Posterior vena cava (tissue), 2 donors: ENCODE measurements at regions of chr4 and their contacts with region 1.

Region 1: GRCh38 chr4:147111033-147111367 is 165.3 kb upstream of the TTC29 start:
- DNase-seq: no peak

Region 2: DNA sequence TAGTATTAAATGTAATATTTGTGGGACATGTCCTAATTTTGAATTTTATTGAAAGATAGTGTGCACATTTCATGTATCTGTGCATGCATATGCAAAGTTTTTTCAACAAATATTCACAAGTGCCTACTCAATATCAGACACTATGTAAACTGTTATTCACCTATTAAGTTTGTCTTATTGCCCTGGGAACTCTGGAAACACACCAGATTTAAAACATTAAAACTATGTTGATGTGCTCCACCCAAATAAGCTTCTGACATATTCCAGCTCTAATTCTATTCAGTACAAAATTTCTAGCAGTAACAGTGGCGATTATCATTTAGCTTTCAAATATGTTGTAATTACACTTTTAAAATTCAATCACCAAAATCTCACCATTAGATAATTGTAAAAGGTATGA is 17.8 kb after region 1 on chr4:
- intact Hi-C with region 1: no loop called
- DNase-seq: no peak

Region 3: DNA sequence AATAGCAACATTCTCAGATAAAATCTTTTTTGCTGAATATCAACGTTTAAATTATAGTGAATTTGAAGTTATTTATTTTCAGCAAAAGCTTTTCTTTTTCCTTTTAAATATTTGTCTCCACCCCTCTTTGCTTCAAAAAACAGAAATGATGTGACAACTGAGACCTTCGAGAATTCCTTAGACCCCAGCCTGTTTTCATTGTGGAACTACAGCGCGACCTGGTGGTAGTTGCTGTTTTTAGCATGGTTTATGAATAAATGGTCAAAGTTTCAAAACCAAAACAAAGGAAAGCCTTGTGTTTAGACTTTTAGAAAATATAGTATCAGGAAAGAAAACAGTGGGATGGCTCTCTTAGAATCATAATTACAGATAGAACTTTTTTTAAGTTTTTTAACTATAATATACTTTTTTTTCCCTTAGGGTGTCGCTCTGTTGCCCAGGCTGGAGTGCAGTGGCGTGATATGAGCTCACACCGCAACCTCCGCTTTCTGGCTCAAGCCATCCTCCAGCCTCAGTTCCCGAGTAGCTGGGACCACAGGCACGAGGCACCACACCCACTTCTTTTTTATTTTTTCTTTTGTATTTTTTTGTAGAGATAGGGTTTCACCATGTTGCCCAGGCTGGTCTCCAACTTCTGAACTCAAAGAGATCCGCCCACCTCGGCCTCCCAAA is 479.4 kb after region 1 on chr4:
- intact Hi-C with region 1: loop called (anchors 5 to 10 kb)
- DNase-seq: peak; percentile 83

Region 4: GRCh38 chr4:148355442-148356123 is 1244.6 kb after region 1 on chr4:
- intact Hi-C with region 1: no loop called
- DNase-seq: no peak